Vagina (tissue), 2 donors: ENCODE measurements at regions of chr7 and their contacts with region 1.

Region 1: GRCh38 chr7:3206771-3207191 is 94.3 kb upstream of the SDK1 start:
- DNase-seq: peak; percentile 42 to 61
- H3K4me3 ChIP-seq: no peak overlapping the region
- H3K27ac ChIP-seq: no peak overlapping the region
- H3K4me1 ChIP-seq: no peaks in the 10 kb centered on the region
- H3K27me3 ChIP-seq: no peaks in the 10 kb centered on the region
- CTCF ChIP-seq: no peak
- POLR2A ChIP-seq: no peak

Region 2: DNA sequence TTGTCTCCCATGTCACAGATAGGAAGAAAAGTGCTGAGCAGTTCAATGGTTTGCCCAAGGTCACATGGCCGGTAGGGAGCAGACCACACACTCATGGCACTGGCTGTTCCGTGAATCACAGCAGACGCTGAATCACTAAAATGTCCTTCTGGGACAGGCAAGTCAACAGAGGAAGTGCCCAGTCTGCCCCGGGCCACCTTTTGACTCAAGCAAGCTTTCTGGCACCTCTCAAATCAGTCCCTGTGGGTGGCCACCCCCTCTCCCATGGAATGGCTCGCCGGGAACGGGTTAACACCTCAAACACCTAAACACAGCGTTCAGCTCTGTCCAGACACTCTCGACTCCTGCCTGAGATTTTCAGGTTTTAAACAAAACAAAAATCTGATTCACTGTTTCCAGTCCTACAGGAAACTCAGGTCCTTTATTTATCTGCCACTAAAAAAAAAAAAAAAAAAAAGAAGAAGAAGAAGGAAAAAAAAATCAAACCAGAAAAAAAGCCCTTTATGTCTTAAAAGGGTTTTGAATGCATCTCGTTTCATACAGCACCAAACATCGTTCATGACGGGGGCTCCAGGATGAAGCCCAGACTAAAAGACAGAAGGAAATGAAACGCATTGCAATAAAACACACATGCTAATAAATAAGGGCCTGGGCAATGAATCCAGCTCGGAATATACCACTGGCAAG is 178.6 kb before region 1 on chr7:
- intact Hi-C with region 1: loop called (anchors 5 kb)
- DNase-seq: no peak
- H3K4me3 ChIP-seq: no peak overlapping the region
- H3K27ac ChIP-seq: no peak overlapping the region
- H3K4me1 ChIP-seq: peaks cover 21% of the 10 kb centered on the region
- H3K27me3 ChIP-seq: no peaks in the 10 kb centered on the region
- CTCF ChIP-seq: no peak
- POLR2A ChIP-seq: no peak